ENCODE measurements at regions of chr2 and their contacts with region 1.

Region 1: DNA sequence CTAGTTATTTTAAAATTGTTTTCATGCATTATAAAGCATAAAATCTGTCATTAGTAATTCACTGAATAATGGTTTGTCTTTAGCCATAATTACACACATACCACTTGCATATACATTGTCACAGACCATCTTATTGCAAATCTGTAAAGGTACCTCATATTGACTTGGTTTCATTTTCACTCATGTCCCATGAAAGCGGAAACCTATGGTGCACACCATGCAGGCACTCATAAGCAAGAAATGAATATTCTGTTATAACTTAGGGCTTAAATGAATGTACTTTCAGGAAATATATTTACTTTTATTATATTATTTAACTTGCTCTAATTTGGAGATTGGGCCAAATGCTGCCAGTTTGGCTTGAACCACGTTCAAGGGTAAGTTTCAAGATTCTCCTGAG is 29.2 kb upstream of the STK17B start:
- DNase-seq: peak; percentile 85
- H3K4me3 Mint-ChIP-seq: peak overlapping the region; percentile 55
- H3K27ac Mint-ChIP-seq: peak overlapping the region; percentile 90
- H3K4me1 Mint-ChIP-seq: peaks cover 35% of the 10 kb centered on the region
- H3K27me3 Mint-ChIP-seq: no peaks in the 10 kb centered on the region

Region 2: GRCh38 chr2:196177124-196177523 is 23.4 kb before region 1 on chr2:
- intact Hi-C with region 1: loop called (anchors 1 kb)
- DNase-seq: peak; percentile 67
- H3K4me3 Mint-ChIP-seq: peak overlapping the region; percentile 78
- H3K27ac Mint-ChIP-seq: peak overlapping the region; percentile 92
- H3K4me1 Mint-ChIP-seq: peaks cover 73% of the 10 kb centered on the region
- H3K27me3 Mint-ChIP-seq: no peaks in the 10 kb centered on the region

Region 3: GRCh38 chr2:196182439-196183171 is 18.0 kb before region 1 on chr2:
- intact Hi-C with region 1: loop called (anchors 1 kb)
- DNase-seq: no peak
- H3K4me3 Mint-ChIP-seq: peak overlapping the region; percentile 84
- H3K27ac Mint-ChIP-seq: peak overlapping the region; percentile 98
- H3K4me1 Mint-ChIP-seq: peaks cover 57% of the 10 kb centered on the region
- H3K27me3 Mint-ChIP-seq: no peaks in the 10 kb centered on the region

Region 4: GRCh38 chr2:196268538-196269338 is 68.2 kb after region 1 on chr2:
- intact Hi-C with region 1: loop called (anchors 2 kb)
- DNase-seq: no peak
- H3K4me3 Mint-ChIP-seq: peak overlapping the region; percentile 65
- H3K27ac Mint-ChIP-seq: peak overlapping the region; percentile 65
- H3K4me1 Mint-ChIP-seq: peaks cover 36% of the 10 kb centered on the region
- H3K27me3 Mint-ChIP-seq: no peaks in the 10 kb centered on the region

Region 5: GRCh38 chr2:196291873-196292800 is 91.6 kb after region 1 on chr2:
- intact Hi-C with region 1: loop called (anchors 2 kb)
- DNase-seq: no peak
- H3K4me3 Mint-ChIP-seq: no peak overlapping the region
- H3K27ac Mint-ChIP-seq: no peak overlapping the region
- H3K4me1 Mint-ChIP-seq: peaks cover 39% of the 10 kb centered on the region
- H3K27me3 Mint-ChIP-seq: no peaks in the 10 kb centered on the region

Region 6: GRCh38 chr2:196670342-196670741 is 469.8 kb after region 1 on chr2:
- intact Hi-C with region 1: no loop called
- DNase-seq: no peak
- H3K4me3 Mint-ChIP-seq: no peak overlapping the region
- H3K27ac Mint-ChIP-seq: no peak overlapping the region
- H3K4me1 Mint-ChIP-seq: no peaks in the 10 kb centered on the region
- H3K27me3 Mint-ChIP-seq: no peaks in the 10 kb centered on the region

Region 7: GRCh38 chr2:197425550-197425949 is 1225.0 kb after region 1 on chr2:
- intact Hi-C with region 1: no loop called
- DNase-seq: no peak
- H3K4me3 Mint-ChIP-seq: peak overlapping the region; percentile 6
- H3K27ac Mint-ChIP-seq: peak overlapping the region; percentile 27
- H3K4me1 Mint-ChIP-seq: peaks cover 54% of the 10 kb centered on the region
- H3K27me3 Mint-ChIP-seq: no peaks in the 10 kb centered on the region

Measured in activated CD4-positive, alpha-beta T cell treated with anti-CD3 and anti-CD28 coated beads, Interleukin-2, amount 10 ng/mL, durations not matched to agents 24 days and 14 days (primary cell).